ENCODE measurements at regions of chr14 and their contacts with region 1.

Region 1: DNA sequence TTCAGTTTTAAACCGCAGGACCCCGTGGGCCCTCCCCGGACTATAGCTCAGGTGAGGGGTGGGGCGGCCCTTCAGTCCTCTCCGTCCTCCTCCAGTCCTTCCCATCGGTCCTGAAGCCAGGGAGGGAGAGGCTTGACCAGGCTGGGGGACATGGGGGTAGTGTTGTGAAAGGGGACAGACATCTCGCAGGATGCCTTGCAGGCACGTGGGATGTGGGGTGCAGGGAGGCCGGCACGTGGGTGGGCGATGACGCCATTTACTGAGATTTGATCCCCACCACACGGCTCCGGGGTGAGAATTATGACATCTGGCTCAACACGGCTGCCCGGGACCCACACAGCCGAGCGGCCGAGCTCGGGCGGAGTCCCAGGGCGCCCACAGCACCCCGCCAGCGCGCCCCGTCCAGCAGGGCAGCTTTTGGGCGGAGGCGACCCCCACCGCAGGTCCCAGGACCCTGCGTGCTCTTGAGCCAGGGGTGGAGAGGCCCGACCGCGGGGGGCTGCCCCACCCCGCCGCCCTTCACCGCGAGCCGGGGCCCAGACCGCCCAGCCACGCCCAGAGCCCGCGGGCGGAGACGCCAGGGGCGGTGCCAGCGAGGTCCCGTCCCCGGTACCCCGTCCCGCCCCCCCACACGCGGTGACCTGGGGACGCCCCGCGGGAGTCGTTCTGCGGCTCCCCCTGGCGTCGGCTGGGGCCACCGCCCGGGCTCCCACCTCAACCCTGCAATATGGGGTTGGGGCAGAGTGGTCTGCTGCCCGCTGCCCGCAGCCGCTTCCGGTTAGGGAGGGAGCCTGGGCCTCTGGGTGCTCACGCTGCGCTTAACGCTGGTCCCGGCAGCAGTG is 3.3 kb upstream of the EXOC3L4 start:
- DNase-seq: no peak
- ATAC-seq: peak in 1 of 2 donors; percentile 52
- H3K4me3 ChIP-seq: peak overlapping the region; percentile 34 to 59 (median 48)
- H3K27ac ChIP-seq: no peak overlapping the region
- H3K4me1 ChIP-seq: peaks cover 0 to 8% of the 10 kb centered on the region in 2 donors
- H3K27me3 ChIP-seq: no peaks in the 10 kb centered on the region
- CTCF ChIP-seq: peak in 3 of 5 experiments; percentile 55 to 58 (median 56)
- POLR2A ChIP-seq: no peak

Region 2: GRCh38 chr14:102694530-102695166 is 396.6 kb before region 1 on chr14:
- in situ Hi-C with region 1: no loop called
- intact Hi-C with region 1: loop called (anchors 1 kb)
- DNase-seq: peak; percentile 40 to 41
- ATAC-seq: peak; percentile 46 to 75
- H3K4me3 ChIP-seq: no peak overlapping the region
- H3K27ac ChIP-seq: no peak overlapping the region
- H3K4me1 ChIP-seq: peaks cover 49 to 51% of the 10 kb centered on the region in 2 donors
- H3K27me3 ChIP-seq: no peaks in the 10 kb centered on the region
- CTCF ChIP-seq: peak; percentile 55 to 75 (median 68)
- POLR2A ChIP-seq: no peak